PC-9 (cell line): ENCODE measurements at regions of chr7 and their contacts with region 1.

Region 1: GRCh38 chr7:4951903-4952636 is 6.9 kb downstream of the MMD2 start:
- DNase-seq: peak in 1 of 2 experiments; percentile 20
- H3K4me3 ChIP-seq: no peak overlapping the region
- H3K27ac ChIP-seq: no peak overlapping the region
- H3K4me1 ChIP-seq: no peaks in the 10 kb centered on the region
- H3K27me3 ChIP-seq: peaks cover 89% of the 10 kb centered on the region
- CTCF ChIP-seq: no peak

Region 2: GRCh38 chr7:5005066-5005465 is 53.0 kb after region 1 on chr7:
- CTCF ChIA-PET with region 1: no interaction called
- POLR2A ChIA-PET with region 1: interaction called, 16 read pairs
- intact Hi-C with region 1: no loop called
- DNase-seq: no peak
- H3K4me3 ChIP-seq: no peak overlapping the region
- H3K27ac ChIP-seq: no peak overlapping the region
- H3K4me1 ChIP-seq: no peaks in the 10 kb centered on the region
- H3K27me3 ChIP-seq: no peaks in the 10 kb centered on the region
- CTCF ChIP-seq: no peak